ENCODE measurements at regions of chr1 and their contacts with region 1.

Region 1: GRCh38 chr1:64136752-64137411 is 66.5 kb upstream of the UBE2U start:
- DNase-seq: peak; percentile 64 to 90 (median 81)
- ATAC-seq: peak; percentile 85 to 87
- H3K4me3 ChIP-seq: no peak overlapping the region
- H3K27ac ChIP-seq: no peak overlapping the region
- H3K4me1 ChIP-seq: no peaks in the 10 kb centered on the region
- H3K27me3 ChIP-seq: no peaks in the 10 kb centered on the region

Region 2: DNA sequence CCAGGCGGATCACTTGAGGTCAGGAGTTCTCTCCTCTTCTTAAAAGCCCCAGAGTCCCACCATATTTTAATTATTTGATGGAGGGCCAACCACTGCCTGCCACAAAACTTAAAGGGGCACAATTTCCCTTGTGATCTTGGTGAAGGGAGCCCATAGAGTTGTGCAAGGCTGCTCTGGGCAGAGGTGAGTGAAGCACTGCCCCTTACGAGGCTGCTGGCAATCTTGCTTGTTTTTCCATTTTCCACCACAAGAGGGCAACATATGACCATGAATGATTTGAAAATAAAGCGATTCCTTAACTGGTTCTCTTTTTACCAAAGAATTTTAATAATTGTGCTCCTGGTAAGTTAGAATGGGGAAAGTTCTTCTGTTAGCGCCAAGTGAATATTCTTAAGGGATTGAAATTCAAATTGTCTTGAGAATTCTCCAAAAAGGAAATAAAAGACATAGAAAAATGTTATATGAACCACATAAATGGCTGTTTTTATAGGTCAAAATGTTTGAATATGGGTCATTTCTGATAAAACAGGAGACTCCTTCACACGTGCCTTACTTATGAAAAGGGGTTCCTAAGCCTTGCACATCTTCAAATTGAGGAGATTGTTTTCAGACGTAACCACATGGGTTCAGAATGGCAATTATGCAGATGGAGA is 521.0 kb before region 1 on chr1:
- intact Hi-C with region 1: loop called in 1 of 4 experiments (anchors 10 kb)
- DNase-seq: peak in 2 of 3 donors; percentile 31 to 47
- ATAC-seq: peak; percentile 63 to 66
- H3K4me3 ChIP-seq: no peak overlapping the region
- H3K27ac ChIP-seq: no peak overlapping the region
- H3K4me1 ChIP-seq: no peaks in the 10 kb centered on the region
- H3K27me3 ChIP-seq: no peaks in the 10 kb centered on the region

Region 3: DNA sequence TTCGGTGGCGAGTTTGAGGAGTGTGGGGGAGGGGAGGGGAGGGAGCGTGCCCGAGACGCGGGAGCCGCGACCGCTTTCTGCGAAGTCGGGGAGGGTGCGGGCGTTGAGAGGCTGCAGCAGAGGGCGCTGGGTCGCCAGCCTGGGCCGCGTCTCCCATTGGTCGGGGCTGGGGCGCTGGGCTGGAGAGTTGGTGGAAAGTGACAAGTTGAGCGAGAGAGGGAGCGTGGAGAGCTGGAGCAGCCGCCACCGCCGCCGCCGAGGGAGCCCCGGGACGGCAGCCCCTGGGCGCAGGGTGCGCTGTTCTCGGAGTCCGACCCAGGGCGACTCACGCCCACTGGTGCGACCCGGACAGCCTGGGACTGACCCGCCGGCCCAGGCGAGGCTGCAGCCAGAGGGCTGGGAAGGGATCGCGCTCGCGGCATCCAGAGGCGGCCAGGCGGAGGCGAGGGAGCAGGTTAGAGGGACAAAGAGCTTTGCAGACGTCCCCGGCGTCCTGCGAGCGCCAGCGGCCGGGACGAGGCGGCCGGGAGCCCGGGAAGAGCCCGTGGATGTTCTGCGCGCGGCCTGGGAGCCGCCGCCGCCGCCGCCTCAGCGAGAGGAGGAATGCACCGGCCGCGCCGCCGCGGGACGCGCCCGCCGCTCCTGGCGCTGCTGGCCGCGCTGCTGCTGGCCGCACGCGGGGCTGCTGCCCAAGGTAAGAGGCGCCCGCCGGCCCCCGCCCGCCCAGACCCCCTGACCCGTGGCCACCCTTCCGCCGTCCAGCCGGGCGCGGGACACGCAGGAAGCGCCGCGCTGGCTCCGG is 362.9 kb before region 1 on chr1 and contains the start of gene ROR1:
- intact Hi-C with region 1: loop called in 2 of 4 experiments (anchors 5 to 10 kb)
- DNase-seq: peak; percentile 88 to 95 (median 94)
- ATAC-seq: peak; percentile 98
- H3K4me3 ChIP-seq: peak within 1 kb of the TSS; percentile 80
- H3K27ac ChIP-seq: peak within 1 kb of the TSS; percentile 74
- H3K4me1 ChIP-seq: no peaks in the 10 kb centered on the region
- H3K27me3 ChIP-seq: no peaks in the 10 kb centered on the region
- total RNA-seq, gene ROR1: 10.6 to 32.5 (median 13.5) TPM

Region 4: DNA sequence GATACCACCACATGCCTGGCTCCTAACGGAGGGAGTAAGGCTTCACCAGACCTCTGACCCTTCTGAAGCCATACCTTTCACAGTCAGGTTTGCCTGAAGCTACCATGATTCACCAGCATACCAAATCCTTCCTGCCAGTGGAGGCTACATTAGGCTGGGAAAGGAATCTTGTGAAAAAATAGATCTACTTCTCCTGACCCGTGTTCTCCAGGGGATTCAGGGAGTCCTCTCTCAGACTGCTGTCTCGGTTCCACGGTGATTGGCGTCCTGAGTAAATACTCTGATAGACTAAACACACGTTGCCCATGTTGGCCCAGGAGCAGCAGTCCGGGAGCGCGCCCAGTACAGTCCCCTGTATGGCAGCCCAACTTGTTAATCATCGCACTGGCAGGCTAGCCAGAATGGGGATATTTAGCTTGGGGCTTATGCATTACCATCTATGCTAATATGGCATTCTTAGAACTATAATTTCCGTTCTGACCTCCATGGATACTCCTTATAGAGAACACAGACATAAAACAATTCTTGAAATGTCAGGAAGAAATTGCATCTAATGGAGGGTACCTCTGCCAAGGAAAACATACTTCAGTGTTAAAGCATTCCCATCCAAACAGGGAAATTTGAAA is 189.9 kb before region 1 on chr1:
- intact Hi-C with region 1: loop called in 1 of 4 experiments (anchors 10 kb)
- DNase-seq: peak; percentile 43 to 79 (median 70)
- ATAC-seq: peak; percentile 68
- H3K4me3 ChIP-seq: no peak overlapping the region
- H3K27ac ChIP-seq: no peak overlapping the region
- H3K4me1 ChIP-seq: peaks cover 6% of the 10 kb centered on the region
- H3K27me3 ChIP-seq: no peaks in the 10 kb centered on the region

Measured in right cardiac atrium (tissue), 5 donors.